ENCODE measurements at regions of chr6 and their contacts with region 1.

Region 1: GRCh38 chr6:113690281-113691259 is 166.6 kb upstream of the MARCKS start:
- DNase-seq: peak; percentile 88
- H3K4me3 Mint-ChIP-seq: no peak overlapping the region
- H3K27ac Mint-ChIP-seq: no peak overlapping the region
- H3K4me1 Mint-ChIP-seq: peaks cover 29% of the 10 kb centered on the region
- H3K27me3 Mint-ChIP-seq: no peaks in the 10 kb centered on the region
- CTCF ChIP-seq: no peak

Region 2: DNA sequence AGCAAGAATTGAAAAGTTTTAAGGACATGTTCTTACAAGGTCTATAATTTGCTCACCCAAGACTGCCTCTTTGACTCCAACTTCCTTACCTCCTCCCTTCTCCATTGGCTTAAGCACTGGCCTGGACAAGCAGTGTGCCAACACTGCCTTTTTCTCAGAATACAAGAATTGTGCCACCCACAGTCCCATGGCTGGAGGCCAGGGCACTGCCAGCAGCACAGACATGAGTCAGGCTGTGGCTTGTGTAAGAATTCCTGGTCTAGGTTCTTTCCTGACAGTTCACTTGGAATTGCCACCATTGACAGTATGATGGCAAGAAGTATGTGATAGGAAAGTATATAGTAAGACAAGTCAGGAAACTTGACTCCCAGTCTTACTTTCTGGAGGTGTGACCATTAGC is 36.2 kb before region 1 on chr6:
- CTCF ChIA-PET with region 1: no interaction called
- POLR2A ChIA-PET with region 1: interaction called, 6 read pairs
- intact Hi-C with region 1: loop called (anchors 2 kb)
- DNase-seq: peak; percentile 99
- H3K4me3 Mint-ChIP-seq: no peak overlapping the region
- H3K27ac Mint-ChIP-seq: peak overlapping the region; percentile 59
- H3K4me1 Mint-ChIP-seq: peaks cover 25% of the 10 kb centered on the region
- H3K27me3 Mint-ChIP-seq: no peaks in the 10 kb centered on the region
- CTCF ChIP-seq: no peak

Region 3: DNA sequence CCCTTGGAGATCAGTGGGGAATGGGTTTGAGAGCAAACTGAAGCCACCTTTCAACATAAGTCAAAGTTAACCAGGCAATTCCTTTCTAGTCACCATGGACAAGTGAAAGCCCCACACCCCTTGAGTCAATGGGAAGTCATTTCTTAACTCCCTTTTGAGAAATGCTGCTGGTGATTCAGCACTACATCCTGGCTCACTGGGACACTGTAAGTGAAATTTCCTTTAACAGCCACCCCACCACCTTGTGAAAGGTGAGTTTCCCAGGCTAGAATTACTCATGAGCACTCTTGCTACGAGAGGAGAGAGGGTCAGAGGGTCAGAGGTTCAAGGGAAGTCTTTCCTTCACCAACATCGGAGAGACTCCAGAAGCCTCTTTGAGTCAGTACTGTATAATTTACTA is 73.3 kb after region 1 on chr6:
- CTCF ChIA-PET with region 1: no interaction called
- POLR2A ChIA-PET with region 1: no interaction called
- intact Hi-C with region 1: loop called (anchors 10 kb)
- DNase-seq: peak; percentile 92
- H3K4me3 Mint-ChIP-seq: no peak overlapping the region
- H3K27ac Mint-ChIP-seq: peak overlapping the region; percentile 81
- H3K4me1 Mint-ChIP-seq: peaks cover 14% of the 10 kb centered on the region
- H3K27me3 Mint-ChIP-seq: no peaks in the 10 kb centered on the region
- CTCF ChIP-seq: no peak

Measured in MCF 10A (cell line).